Caco-2 (cell line): ENCODE measurements at regions of chr11 and their contacts with region 1.

Region 1: GRCh38 chr11:123674297-123674696 is 19.9 kb upstream of the SCN3B start:
- DNase-seq: no peak
- H3K4me3 ChIP-seq: no peak overlapping the region
- H3K4me3 Mint-ChIP-seq: no peak overlapping the region
- H3K27ac Mint-ChIP-seq: no peak overlapping the region
- H3K4me1 ChIP-seq: no peaks in the 10 kb centered on the region
- H3K4me1 Mint-ChIP-seq: no peaks in the 10 kb centered on the region
- H3K27me3 ChIP-seq: peaks cover 2% of the 10 kb centered on the region; the same call in 1 of the 2 replicates
- H3K27me3 Mint-ChIP-seq: peaks cover 13% of the 10 kb centered on the region
- CTCF ChIP-seq: no peak

Region 2: DNA sequence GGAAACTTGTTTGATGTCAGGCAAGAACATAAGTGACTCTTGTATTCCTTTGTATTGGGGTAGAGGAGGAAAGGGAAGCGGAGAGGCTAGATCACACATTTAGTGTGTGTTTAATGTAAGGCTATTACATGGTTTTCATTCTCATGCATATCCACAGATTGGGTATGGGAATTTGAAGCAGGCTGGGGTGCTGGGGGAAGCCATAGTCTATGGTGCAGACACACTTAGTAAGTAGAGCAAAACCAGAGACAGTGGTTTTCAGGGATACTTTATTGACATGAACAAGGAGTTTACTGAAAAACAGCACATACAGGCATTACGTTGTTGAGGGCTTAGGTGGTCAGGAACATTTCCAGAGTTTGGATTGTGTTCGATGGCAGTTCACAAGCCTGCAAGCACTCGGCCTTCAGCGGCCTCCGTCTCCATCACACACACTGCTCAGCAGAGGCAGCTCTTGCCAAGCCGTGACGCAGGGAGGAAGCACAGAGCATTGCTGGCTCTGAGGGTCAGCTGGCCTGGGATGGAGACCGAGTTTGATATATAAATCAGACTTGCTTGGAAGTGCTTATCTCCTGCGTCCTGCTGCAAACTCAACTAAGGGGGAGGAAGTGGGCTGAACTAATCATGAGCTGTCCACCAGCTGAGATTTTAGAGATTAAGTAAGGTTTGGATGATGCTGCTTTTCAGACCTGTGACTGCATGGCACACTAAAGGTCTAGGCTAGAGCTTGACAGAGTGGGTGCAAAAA is 45.2 kb before region 1 on chr11:
- CTCF ChIA-PET with region 1: no interaction called
- POLR2A ChIA-PET with region 1: no interaction called
- intact Hi-C with region 1: no loop called
- DNase-seq: no peak
- H3K4me3 ChIP-seq: no peak overlapping the region
- H3K4me3 Mint-ChIP-seq: no peak overlapping the region
- H3K27ac Mint-ChIP-seq: no peak overlapping the region
- H3K4me1 ChIP-seq: no peaks in the 10 kb centered on the region
- H3K4me1 Mint-ChIP-seq: no peaks in the 10 kb centered on the region
- H3K27me3 ChIP-seq: 0 out of 2 replicates have a peak, but pooled peaks cover 1% of the 10 kb centered on the region
- H3K27me3 Mint-ChIP-seq: peaks cover 32% of the 10 kb centered on the region
- CTCF ChIP-seq: no peak

Region 3: DNA sequence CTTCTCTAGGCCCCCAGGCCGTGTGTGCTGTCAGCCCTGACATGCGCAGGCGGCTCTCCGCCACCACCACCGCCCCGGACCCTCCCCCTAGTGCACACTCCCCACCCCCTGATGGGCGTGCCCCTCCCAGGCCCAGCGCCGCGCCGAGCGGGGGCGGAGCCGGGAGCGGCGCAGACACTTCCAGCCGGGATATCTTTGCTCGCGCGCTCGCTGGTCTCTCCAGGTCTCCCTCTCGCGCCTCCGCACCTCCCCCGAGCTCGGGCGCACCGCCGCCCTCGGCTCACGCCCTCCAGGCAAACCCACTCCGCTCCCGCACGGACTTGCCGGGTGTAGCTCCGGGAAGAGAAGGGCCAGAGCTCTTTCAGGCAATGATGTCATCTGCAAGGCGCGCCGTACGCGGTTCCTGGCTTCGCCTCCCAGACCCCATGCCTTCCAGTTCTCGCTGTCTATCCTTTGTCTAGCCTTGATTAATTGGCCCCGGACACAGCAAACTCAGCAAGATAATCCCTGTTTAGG is 19.7 kb before region 1 on chr11 and contains the start of gene SCN3B:
- CTCF ChIA-PET with region 1: no interaction called
- POLR2A ChIA-PET with region 1: no interaction called
- intact Hi-C with region 1: loop called (anchors 1 kb)
- DNase-seq: peak; percentile 90 to 92
- H3K4me3 ChIP-seq: peak within 1 kb of the TSS; percentile 61
- H3K4me3 Mint-ChIP-seq: peak within 1 kb of the TSS; percentile 66
- H3K27ac Mint-ChIP-seq: no peak within 1 kb of the TSS
- H3K4me1 ChIP-seq: no peaks in the 10 kb centered on the region; the same call in 1 of the 2 replicates
- H3K4me1 Mint-ChIP-seq: no peaks in the 10 kb centered on the region
- H3K27me3 ChIP-seq: 0 out of 2 replicates have a peak, but pooled peaks cover 1% of the 10 kb centered on the region
- H3K27me3 Mint-ChIP-seq: peaks cover 35% of the 10 kb centered on the region
- CTCF ChIP-seq: no peak
- total RNA-seq, gene SCN3B: 0.77 and 0.82 TPM in 2 replicates